CD14-positive monocyte (primary cell): ENCODE measurements at regions of chr20 and their contacts with region 1.

Region 1: GRCh38 chr20:37007898-37008649 is 56.6 kb upstream of the SAMHD1 start:
- DNase-seq: peak; percentile 33 to 66 (median 50)
- H3K4me3 ChIP-seq: peak overlapping the region in 1 of 3 experiments; percentile 62
- H3K4me3 Mint-ChIP-seq: peak overlapping the region; percentile 56 to 84
- H3K27ac ChIP-seq: peak overlapping the region; percentile 72 to 96
- H3K27ac Mint-ChIP-seq: peak overlapping the region; percentile 96 to 99 (median 98)
- H3K4me1 ChIP-seq: peaks cover 75 to 82% of the 10 kb centered on the region in 2 donors
- H3K4me1 Mint-ChIP-seq: peaks cover 61% of the 10 kb centered on the region
- H3K27me3 ChIP-seq: no peaks in the 10 kb centered on the region
- H3K27me3 Mint-ChIP-seq: no peaks in the 10 kb centered on the region
- CTCF ChIP-seq: peak; percentile 53

Region 2: GRCh38 chr20:36951198-36951976 is 56.7 kb before region 1 on chr20 and contains the start of gene SAMHD1:
- intact Hi-C with region 1: loop called in 1 of 2 experiments (anchors 2 kb)
- DNase-seq: peak; percentile 97 to 100 (median 99)
- H3K4me3 ChIP-seq: peak within 1 kb of the TSS; percentile 72 to 100 (median 99)
- H3K4me3 Mint-ChIP-seq: peak within 1 kb of the TSS; percentile 97 to 98
- H3K27ac ChIP-seq: peak within 1 kb of the TSS; percentile 91 to 94
- H3K27ac Mint-ChIP-seq: peak within 1 kb of the TSS; percentile 96 to 99 (median 98)
- H3K4me1 ChIP-seq: peaks cover 62 to 70% of the 10 kb centered on the region in 2 donors
- H3K4me1 Mint-ChIP-seq: peaks cover 54% of the 10 kb centered on the region
- H3K27me3 ChIP-seq: no peaks in the 10 kb centered on the region
- H3K27me3 Mint-ChIP-seq: no peaks in the 10 kb centered on the region
- CTCF ChIP-seq: no peak
- polyA plus RNA-seq, gene SAMHD1: 232 to 796 (median 590) TPM

Region 3: DNA sequence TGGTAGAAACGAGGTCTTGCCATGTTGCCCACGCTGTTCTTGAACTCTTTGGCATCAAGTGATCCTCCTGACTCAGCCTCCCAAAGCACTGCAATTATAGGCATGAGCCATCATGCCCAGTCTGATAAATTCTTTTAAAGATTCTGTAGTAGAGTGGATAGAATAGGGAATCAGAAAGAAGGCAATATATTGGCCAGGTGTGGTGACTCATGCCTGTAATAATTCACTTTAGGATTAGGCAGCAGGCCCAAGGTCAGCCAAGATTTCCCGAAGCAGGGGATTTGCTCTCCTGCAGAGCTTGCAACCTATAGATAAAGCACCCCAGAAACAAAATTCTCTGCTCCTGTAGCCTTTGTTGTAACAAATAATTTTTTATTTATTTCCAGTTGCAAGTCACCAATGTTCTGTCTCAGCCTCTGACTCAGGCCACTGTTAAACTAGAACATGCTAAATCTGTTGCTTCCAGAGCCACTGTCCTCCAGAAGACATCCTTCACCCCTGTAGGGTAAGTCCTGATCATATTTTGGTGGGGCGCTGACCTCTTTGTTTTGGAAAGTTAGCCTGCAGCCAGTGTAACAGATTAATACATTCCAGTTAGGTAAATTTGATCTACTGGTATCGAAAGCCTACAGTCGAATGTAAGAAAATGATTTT is 201.7 kb after region 1 on chr20:
- intact Hi-C with region 1: no loop called
- DNase-seq: no peak
- H3K4me3 ChIP-seq: no peak overlapping the region
- H3K4me3 Mint-ChIP-seq: no peak overlapping the region
- H3K27ac ChIP-seq: no peak overlapping the region
- H3K27ac Mint-ChIP-seq: no peak overlapping the region
- H3K4me1 ChIP-seq: no peaks in the 10 kb centered on the region
- H3K4me1 Mint-ChIP-seq: no peaks in the 10 kb centered on the region
- H3K27me3 ChIP-seq: no peaks in the 10 kb centered on the region
- H3K27me3 Mint-ChIP-seq: peaks cover 0 to 2% (median 0%) of the 10 kb centered on the region in 3 donors
- CTCF ChIP-seq: no peak